Right ventricle myocardium inferior (tissue), 1 donor: ENCODE measurements at regions of chr4 and their contacts with region 1.

Region 1: GRCh38 chr4:184474263-184475095 is at the start of gene IRF2:
- DNase-seq: peak; percentile 98
- ATAC-seq: peak; percentile 95
- total RNA-seq, gene IRF2: 34.0 TPM

Region 2: DNA sequence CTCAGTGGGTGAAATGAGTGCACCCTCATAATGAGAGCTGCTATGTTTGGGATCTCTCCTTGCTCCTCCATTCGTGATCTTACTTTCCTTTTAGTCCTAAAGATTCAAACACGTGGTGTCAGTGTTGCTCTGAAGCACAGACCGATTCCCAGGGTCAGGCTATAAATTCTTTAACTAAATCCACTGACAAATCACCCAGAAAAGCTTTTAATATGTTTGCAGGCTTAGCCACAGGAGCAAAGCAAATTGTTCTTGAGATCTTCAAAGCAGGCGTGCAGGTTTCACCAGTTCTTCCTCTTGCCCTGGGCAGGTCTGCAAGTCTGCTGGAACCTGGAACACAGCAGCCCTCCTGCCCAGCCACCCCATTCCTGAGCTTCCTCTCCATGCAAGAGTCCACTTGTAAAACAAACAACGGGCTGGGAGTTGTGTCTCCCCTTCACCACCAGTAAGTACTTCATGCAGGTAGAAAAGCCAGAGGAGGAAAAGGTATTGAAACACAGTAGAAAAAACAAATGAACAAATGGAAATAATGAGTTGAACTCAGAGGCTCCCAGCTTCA is 186.7 kb before region 1 on chr4:
- intact Hi-C with region 1: loop called (anchors 5 kb)
- DNase-seq: no peak
- ATAC-seq: peak; percentile 74

Region 3: DNA sequence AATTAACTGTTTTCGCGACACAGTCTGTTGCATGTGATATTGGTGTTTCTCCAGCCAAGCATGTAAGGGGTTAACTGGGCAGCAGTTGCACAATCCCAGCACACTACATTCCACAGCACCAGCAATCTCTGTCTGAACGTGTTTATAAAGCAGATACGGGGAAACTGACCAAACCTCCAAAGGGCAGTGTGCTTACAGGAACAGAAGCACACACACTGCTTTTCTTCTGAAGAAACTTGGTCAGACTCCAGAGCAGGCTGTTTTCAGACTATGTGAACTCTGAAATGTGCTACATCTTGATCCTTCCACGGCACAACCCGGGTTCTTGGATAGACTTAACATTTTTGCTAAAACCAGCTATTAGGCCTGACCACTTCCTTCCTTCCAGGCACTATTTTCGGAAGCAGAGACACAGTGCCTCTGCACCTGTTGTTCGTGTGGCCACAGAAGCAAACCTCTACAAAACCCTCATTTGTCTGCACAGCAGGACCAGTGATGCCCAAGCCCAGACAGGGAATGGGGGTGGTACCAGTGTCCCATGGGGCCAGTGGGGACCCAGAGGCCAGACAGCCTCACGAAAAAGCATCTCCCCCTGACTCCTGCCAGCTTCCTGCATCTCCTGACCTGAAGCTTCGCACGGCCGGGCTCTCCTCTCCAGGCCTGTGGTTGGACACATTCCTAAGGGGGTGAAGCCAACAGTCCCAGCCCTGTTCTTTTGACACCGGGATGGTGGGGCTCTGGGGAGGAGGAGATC is 90.2 kb before region 1 on chr4:
- intact Hi-C with region 1: loop called (anchors 2 kb)
- DNase-seq: peak; percentile 60
- ATAC-seq: peak; percentile 58

Region 4: GRCh38 chr4:184538023-184538599 is 63.6 kb after region 1 on chr4:
- intact Hi-C with region 1: loop called (anchors 1 kb)
- DNase-seq: peak; percentile 94
- ATAC-seq: peak; percentile 93